ENCODE measurements at regions of chr12 and their contacts with region 1.

Region 1: DNA sequence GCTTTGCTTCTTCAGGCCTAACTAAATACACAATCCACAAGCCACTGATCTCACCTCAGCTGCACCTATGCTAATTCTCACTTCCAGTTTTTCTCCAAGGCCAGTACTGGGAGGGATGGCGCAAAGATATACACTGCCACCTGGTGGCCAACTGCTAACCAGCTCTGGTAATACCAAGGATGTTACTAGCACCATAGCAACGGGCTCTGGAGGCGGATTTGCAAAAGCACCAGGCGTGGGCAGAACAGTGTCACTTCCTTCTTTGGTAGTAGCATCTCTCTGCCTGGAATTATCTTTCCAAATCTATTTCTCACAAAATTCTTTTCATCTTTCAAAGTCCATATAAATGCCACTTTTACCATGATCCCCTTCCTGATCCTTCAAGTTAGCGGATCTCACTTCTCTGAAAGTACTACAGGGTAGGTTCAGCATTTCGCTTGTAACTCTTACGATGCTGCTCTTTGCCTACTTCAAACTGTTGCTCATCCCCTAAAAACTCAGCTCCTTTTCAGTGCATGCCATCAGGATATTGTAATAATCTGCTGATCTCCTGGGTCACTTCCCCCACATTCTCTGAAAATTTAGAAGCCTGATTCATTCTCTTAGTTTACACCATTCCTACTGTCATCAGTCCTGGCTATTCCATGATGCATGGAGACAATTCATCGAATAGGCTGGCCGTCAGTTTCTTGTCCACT is 37.1 kb upstream of the FOXJ2 start:
- DNase-seq: peak; percentile 69
- H3K4me3 ChIP-seq: no peak overlapping the region
- H3K27ac ChIP-seq: no peak overlapping the region
- H3K4me1 ChIP-seq: no peaks in the 10 kb centered on the region
- H3K27me3 ChIP-seq: no peaks in the 10 kb centered on the region
- CTCF ChIP-seq: peak; percentile 91

Region 2: GRCh38 chr12:7859552-7859951 is 135.9 kb before region 1 on chr12:
- intact Hi-C with region 1: loop called (anchors 2 kb)
- DNase-seq: no peak
- H3K4me3 ChIP-seq: no peak overlapping the region
- H3K27ac ChIP-seq: no peak overlapping the region
- H3K4me1 ChIP-seq: no peaks in the 10 kb centered on the region
- H3K27me3 ChIP-seq: peaks cover 57% of the 10 kb centered on the region
- CTCF ChIP-seq: no peak

Region 3: GRCh38 chr12:7933255-7933729 is 62.1 kb before region 1 on chr12:
- intact Hi-C with region 1: loop called (anchors 2 kb)
- DNase-seq: peak; percentile 65
- H3K4me3 ChIP-seq: peak overlapping the region; percentile 75
- H3K27ac ChIP-seq: peak overlapping the region; percentile 91
- H3K4me1 ChIP-seq: peaks cover 53% of the 10 kb centered on the region
- H3K27me3 ChIP-seq: peaks cover 9% of the 10 kb centered on the region
- CTCF ChIP-seq: peak; percentile 79